Head of caudate nucleus (tissue), 42 donors: ENCODE measurements at regions of chr11 and their contacts with region 1.

Region 1: GRCh38 chr11:11787305-11788062 is 54.3 kb upstream of the USP47 start:
- DNase-seq: peak; percentile 58 to 94 (median 84)

Region 2: DNA sequence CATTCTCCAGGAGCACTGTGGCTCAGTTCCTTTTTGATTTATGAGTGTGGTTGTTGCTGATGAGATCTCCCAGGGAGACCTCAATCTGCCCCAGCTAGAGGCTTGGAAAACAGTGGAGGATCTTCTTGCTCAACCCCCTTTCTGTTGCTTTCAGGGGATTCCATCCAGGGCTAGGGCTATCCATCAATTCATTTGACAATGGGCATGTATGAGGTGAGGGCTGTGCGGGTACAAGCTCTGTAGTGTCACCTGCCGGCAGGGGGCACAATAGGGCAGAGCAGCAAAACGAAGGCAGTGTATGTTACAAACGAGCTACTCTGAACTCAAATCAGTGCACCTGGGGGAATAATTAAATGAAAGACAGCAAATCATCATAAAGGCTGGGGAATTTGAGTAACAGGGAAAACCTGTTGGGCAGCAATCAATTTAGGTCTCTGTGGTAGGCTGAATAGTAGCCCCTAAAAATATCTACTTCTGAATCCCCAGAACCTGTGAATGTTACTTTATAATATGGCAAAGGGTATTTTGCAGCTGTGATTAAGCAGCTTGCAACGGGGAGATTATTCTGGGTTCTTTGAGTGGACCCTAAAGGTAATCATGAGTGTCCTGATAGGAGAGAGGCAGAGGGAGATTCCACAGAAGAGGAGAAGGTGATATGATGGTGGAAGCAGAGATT is 759.3 kb before region 1 on chr11:
- intact Hi-C with region 1: loop called (anchors 5 kb)
- DNase-seq: peak in 41 of 42 donors; percentile 46 to 86 (median 67)

Region 3: DNA sequence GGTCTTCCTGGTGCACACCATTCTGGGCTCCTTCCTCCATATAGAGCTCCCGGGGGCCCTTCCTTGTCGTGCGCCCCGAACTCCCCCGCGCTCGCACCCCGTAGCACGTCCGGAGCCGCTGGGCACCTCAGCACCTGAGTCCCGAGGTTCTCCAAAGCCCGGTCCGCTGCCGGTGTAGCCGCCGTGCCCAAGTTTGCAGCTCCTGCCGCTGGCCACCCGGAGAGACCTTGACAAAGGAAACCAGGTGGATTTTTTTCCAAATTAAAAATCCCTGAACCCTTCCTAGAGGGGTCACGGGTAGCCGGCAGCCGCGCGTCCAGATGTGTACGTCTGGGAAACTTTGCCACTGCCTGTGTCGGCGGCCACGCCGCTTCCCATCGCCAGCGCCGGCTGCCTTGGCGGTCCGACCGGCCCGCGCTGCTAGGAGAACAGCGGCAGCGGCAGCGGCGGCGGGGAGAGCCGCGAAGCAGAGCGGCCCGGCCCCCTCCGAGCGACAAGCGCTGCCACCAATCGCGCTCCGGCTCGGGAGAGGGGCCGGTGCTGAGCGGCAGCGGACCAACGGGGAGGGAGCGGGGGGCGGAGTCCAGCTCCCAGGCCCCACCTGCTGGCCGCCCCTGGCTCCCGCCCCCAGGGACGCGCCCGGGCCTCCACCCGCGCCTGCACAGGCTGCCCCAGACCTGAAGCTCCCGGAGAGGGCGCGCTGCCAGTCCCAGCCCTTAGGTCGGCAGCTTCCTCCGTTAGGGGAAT is 165.7 kb before region 1 on chr11 and contains the start of gene GALNT18:
- intact Hi-C with region 1: loop called (anchors 10 kb)
- DNase-seq: peak; percentile 77 to 98 (median 94)

Region 4: DNA sequence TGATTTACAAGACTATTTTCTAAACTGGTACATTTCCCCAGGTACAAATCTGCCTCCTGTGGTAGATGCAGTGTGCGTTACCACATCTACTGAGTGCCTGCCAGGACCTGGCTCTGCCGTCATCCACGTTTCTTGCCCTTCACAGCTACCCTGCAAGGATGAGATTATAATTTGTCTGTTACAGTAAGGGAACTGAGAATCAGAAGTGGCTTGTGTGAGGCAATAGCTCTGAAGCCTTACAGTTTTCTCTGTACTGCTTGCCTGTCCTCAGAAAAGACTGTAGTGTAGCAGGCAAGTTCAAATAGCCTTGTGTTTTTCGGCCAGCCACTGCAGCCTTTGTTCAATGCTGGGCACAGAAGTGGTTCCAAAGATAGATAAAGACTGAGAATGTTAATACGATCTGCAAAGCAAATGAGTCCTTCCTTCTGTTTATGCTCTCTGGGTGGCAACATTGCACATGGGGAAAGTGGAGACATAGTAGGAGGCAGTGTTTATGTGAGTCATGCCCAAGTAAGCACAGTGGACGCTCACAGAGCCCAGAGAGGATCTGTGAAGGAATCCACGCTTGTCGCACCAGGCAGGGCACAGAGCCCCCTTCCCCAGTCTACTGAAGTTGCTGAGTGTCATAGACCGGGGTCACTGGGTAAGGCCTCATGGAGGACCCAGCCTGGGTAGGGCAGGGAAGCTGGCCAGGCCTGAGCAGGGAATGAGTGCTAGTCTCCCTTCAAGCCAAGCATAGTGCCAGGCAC is 372.0 kb after region 1 on chr11:
- intact Hi-C with region 1: no loop called
- DNase-seq: peak in 18 of 42 donors; percentile 6 to 62 (median 34)